ENCODE measurements at regions of chr14 and their contacts with region 1.

Region 1: GRCh38 chr14:71320107-71320733 is 413.0 kb downstream of the PCNX1 start:
- DNase-seq: peak; percentile 85 to 99 (median 96)
- H3K4me3 ChIP-seq: peak within 1 kb of the TSS; percentile 67 to 100 (median 87)
- H3K27ac ChIP-seq: peak within 1 kb of the TSS; percentile 72 to 99 (median 95)
- H3K27me3 ChIP-seq: no peaks in the 10 kb centered on the region
- CTCF ChIP-seq: peak in 35 of 56 donors; percentile 6 to 51 (median 31)

Region 2: DNA sequence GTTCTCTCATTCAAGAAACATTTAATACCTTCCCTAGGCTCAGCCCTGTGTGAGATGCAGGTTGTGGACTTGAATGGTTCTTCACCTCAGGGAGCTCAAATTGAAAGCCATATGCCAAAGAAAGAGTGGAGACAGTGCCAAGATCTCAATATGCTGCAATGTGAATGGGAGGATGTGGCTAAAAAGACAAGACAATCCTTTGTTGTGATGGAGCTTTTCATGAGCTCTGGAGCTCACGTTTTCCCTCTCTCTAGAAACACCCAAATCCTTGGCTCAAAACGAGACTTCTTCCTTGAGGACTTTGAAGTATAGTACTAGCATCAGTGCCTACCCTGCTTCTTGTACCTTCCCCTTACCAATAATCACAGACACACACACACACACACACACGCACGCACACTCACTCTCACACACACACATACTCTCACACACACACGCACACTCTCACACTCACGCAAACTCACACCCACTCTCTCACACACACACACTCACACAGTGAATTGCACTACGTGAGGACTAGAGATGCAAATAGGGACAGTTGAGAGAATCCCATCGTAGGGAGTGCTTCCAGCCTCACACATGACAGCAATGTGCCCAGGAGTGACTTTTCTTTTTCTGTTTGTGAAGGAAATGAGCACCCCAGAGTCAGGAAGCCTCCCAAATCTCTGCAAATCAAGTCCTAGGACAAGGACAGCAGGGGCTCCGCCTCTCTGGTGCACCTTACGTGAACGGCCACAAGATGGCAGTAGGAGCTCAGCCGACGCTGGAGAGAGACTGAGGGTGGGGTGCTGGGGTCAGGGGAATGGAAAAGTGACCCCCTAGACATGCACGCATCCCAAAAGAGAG is 181.5 kb before region 1 on chr14:
- intact Hi-C with region 1: loop called (anchors 2 to 5 kb)
- DNase-seq: peak; percentile 37 to 72 (median 53)
- H3K4me3 ChIP-seq: peak overlapping the region in 57 of 59 donors; percentile 6 to 63 (median 42)
- H3K27ac ChIP-seq: peak overlapping the region in 5 of 59 donors; percentile 3 to 59 (median 18)
- H3K27me3 ChIP-seq: no peaks in the 10 kb centered on the region
- CTCF ChIP-seq: peak; percentile 68 to 98 (median 94)

Region 3: GRCh38 chr14:71300566-71301330 is 19.5 kb before region 1 on chr14:
- intact Hi-C with region 1: no loop called
- DNase-seq: no peak
- H3K4me3 ChIP-seq: no peak overlapping the region
- H3K27ac ChIP-seq: no peak overlapping the region
- H3K27me3 ChIP-seq: no peaks in the 10 kb centered on the region
- CTCF ChIP-seq: no peak

Region 4: GRCh38 chr14:71467361-71467811 is 147.2 kb after region 1 on chr14:
- intact Hi-C with region 1: loop called (anchors 10 kb)
- DNase-seq: no peak
- H3K4me3 ChIP-seq: peak overlapping the region in 58 of 59 donors; percentile 6 to 70 (median 40)
- H3K27ac ChIP-seq: peak overlapping the region in 58 of 59 donors; percentile 11 to 91 (median 77)
- H3K27me3 ChIP-seq: no peaks in the 10 kb centered on the region
- CTCF ChIP-seq: no peak

Region 5: DNA sequence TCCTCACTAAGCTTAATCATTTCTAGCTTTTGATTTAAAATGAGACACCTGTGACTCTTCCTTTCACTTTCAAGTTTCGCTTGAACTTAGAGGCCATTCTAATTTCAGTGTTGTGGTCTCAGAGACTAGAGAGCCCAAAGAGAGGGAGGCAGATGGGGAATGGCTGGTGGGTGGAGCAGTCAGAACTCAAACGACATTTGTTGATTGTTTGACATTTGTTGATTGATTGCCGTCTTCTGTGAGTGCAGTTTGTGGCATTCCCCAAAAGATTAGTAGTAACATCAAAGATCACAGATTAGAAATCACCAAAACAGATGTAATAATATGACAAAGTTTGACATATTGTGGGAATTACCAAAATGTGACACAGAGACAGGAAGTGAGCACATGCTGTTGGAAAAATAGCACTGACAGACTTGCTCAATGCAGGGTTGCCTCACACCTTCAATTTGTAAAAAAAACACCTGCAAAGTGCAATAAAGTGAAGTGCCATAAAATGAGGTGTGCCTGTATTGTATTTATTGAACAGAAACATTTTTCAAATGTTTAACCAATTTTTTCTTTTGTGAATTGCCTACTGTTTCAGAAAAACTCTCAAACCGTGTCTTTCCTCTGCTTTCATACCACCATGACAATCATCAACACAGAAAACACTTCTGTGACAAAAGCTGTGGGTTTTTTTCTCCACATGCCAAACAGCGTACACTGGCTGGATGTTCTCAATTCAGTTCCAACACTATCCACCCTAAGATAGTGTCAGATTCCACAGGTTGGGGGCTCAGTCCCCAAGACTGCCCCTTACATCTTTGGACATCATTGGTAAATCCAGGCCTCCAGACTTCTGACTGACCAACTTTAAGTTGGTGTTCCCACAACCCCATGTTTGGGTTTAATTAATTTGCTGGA is 235.7 kb after region 1 on chr14:
- intact Hi-C with region 1: no loop called
- DNase-seq: no peak
- H3K4me3 ChIP-seq: no peak overlapping the region
- H3K27ac ChIP-seq: peak overlapping the region in 11 of 59 donors; percentile 3 to 73 (median 27)
- H3K27me3 ChIP-seq: no peaks in the 10 kb centered on the region
- CTCF ChIP-seq: no peak

Region 6: DNA sequence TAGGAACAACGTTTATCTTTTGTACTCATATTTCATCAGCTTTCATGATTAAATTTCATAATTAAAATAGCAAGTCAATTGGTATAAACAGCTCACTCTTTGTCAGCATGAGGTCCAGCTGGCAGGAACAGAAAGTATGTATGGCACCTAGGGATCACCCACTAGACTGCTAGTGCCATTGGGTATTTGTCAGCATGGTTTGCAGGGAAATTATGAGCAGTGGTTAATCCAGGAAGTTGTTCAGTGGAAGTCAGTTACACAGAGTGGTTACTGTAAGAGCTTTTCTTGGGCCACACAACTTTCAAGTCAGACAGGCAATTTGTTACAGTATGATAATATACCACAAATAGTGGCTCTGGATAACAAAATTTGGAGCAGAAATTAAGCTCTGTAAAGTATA is 271.7 kb after region 1 on chr14:
- intact Hi-C with region 1: loop called in 1 of 2 experiments (anchors 5 kb)
- DNase-seq: no peak
- H3K4me3 ChIP-seq: peak overlapping the region in 29 of 59 donors; percentile 1 to 65 (median 28)
- H3K27ac ChIP-seq: peak overlapping the region in 1 of 59 donors; percentile 1
- H3K27me3 ChIP-seq: no peaks in the 10 kb centered on the region
- CTCF ChIP-seq: no peak

Region 7: DNA sequence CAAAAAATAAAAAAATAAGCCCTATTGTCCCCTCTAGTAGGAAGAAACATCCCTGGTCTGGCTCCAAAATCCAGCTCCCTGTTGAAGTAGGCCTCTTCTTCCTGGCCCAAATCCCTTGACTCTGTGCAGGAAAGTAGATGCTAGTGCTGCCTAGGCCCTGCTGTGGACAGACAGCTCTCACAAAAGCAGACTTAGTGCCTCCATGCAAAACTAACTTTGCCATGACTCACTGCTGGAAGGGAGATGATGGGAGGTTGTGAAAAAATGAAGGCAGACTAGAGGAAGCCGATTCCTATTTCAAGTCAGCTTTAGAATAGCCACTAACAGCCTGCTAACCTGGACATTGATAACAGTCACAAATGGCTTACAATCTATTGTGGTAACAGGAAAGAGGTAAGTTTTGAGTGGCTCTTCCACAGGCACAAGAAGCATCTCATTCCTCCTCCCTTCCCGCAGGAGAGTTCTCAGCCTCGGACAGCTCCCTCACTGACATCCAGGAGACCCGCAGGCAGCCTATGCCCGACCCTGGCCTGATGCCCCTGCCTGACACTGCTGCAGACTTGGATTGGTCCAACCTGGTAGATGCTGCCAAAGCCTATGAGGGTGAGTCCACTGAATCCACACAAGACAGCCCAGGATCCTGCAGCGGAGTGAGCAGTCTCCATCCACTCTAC is 413.1 kb after region 1 on chr14:
- intact Hi-C with region 1: loop called in 1 of 2 experiments (anchors 5 kb)
- DNase-seq: no peak
- H3K4me3 ChIP-seq: no peak overlapping the region
- H3K27ac ChIP-seq: peak overlapping the region in 45 of 59 donors; percentile 1 to 79 (median 43)
- H3K27me3 ChIP-seq: no peaks in the 10 kb centered on the region
- CTCF ChIP-seq: no peak